Heart right ventricle (tissue), 16 donors: ENCODE measurements at regions of chr18 and their contacts with region 1.

Region 1: GRCh38 chr18:55953326-55953725 is 365.3 kb upstream of the TCF4 start:
- DNase-seq: peak in 1 of 2 donors; percentile 9
- ATAC-seq: no peak
- H3K4me3 ChIP-seq: no peak overlapping the region
- H3K27ac ChIP-seq: no peak overlapping the region
- H3K4me1 ChIP-seq: peaks cover 0 to 4% (median 0%) of the 10 kb centered on the region in 9 donors
- H3K27me3 ChIP-seq: no peaks in the 10 kb centered on the region
- CTCF ChIP-seq: no peak

Region 2: DNA sequence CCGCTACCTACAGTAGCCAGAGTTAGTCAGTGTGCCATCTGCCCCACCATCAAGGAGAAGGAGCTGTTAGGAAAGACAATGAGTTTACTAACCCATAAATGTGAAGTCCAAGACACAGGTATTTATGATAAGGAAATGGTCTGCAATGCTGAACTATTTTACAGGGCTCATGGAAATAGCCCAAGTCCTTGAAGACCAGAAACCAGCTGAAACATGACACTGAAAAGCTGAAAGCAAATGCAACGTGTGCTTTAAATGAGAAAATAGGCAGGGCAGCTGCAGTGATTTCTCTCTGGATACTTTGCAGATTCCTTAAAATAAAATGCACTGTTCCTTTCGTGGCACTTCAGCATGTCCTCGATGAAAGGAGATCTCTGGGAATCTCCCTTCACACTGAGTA is 108.9 kb before region 1 on chr18:
- intact Hi-C with region 1: no loop called
- DNase-seq: no peak
- ATAC-seq: no peak
- H3K4me3 ChIP-seq: no peak overlapping the region
- H3K27ac ChIP-seq: no peak overlapping the region
- H3K4me1 ChIP-seq: peaks cover 0 to 7% (median 0%) of the 10 kb centered on the region in 9 donors
- H3K27me3 ChIP-seq: no peaks in the 10 kb centered on the region
- CTCF ChIP-seq: no peak

Region 3: GRCh38 chr18:55927831-55928230 is 25.5 kb before region 1 on chr18:
- intact Hi-C with region 1: loop called in 1 of 10 experiments (anchors 2 kb)
- DNase-seq: no peak
- ATAC-seq: no peak
- H3K4me3 ChIP-seq: no peak overlapping the region
- H3K27ac ChIP-seq: no peak overlapping the region
- H3K4me1 ChIP-seq: peaks cover 0 to 5% (median 0%) of the 10 kb centered on the region in 9 donors
- H3K27me3 ChIP-seq: no peaks in the 10 kb centered on the region
- CTCF ChIP-seq: no peak